Panc1 (cell line): ENCODE measurements at regions of chr14 and their contacts with region 1.

Region 1: GRCh38 chr14:101241150-101241549 is 320.1 kb upstream of the DIO3 start:
- DNase-seq: no peak
- ATAC-seq: no peak
- H3K4me3 ChIP-seq: no peak overlapping the region
- H3K27ac ChIP-seq: no peak overlapping the region
- H3K4me1 ChIP-seq: no peaks in the 10 kb centered on the region
- H3K27me3 ChIP-seq: no peaks in the 10 kb centered on the region
- CTCF ChIP-seq: no peak

Region 2: DNA sequence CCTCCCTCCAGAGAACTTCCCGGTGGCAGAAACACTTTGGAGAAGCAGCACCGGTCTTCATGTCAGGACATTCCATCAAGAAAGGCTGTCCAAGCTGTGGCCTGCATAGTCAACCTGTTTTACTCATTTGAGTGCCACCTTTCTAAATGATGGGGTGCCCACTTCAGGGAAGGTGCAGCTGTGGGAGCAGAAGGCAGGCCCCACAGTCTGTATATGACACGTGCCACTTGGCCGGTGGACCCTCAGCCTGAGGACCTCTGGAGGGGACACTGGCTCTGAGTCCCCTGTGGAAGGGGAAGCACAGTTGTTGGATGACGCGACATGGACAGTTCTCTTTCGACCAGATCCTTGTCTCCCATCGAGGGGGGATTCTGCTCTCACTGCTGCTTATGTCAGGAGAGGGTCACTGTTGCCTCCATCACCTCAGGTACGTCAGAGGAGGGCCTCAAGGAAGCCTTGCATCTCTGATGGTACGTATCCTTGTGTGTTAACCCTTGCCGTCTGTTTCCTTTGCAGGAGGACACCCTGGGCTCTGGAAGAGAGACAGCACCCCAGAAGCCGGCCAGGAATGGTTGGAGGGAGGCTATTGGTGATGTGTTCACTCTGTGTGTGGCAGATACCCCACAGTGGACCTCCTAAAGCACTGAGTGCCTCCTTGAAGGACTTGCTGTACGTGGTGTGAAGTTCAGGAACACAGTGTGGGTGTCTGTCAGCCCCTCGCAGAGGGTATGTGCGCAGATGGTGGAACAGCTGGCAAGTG is 205.5 kb before region 1 on chr14:
- CTCF ChIA-PET with region 1: no interaction called
- POLR2A ChIA-PET with region 1: no interaction called
- in situ Hi-C with region 1: no loop called
- intact Hi-C with region 1: no loop called
- DNase-seq: no peak
- ATAC-seq: no peak
- H3K4me3 ChIP-seq: no peak overlapping the region
- H3K27ac ChIP-seq: no peak overlapping the region
- H3K4me1 ChIP-seq: no peaks in the 10 kb centered on the region
- H3K27me3 ChIP-seq: no peaks in the 10 kb centered on the region
- CTCF ChIP-seq: no peak

Region 3: GRCh38 chr14:101627915-101628262 is 386.7 kb after region 1 on chr14:
- CTCF ChIA-PET with region 1: interaction called, 10 read pairs
- POLR2A ChIA-PET with region 1: no interaction called
- in situ Hi-C with region 1: no loop called
- intact Hi-C with region 1: no loop called
- DNase-seq: no peak
- ATAC-seq: no peak
- H3K4me3 ChIP-seq: no peak overlapping the region
- H3K27ac ChIP-seq: no peak overlapping the region
- H3K4me1 ChIP-seq: peaks cover 3% of the 10 kb centered on the region; the same call in 1 of the 2 replicates
- H3K27me3 ChIP-seq: no peaks in the 10 kb centered on the region
- CTCF ChIP-seq: no peak